MCF 10A (cell line): ENCODE measurements at regions of chr3 and their contacts with region 1.

Region 1: GRCh38 chr3:46089237-46090011 is 62.1 kb upstream of the XCR1 start:
- DNase-seq: peak; percentile 77
- H3K4me3 Mint-ChIP-seq: no peak overlapping the region
- H3K27ac Mint-ChIP-seq: peak overlapping the region; percentile 28
- H3K4me1 Mint-ChIP-seq: peaks cover 4% of the 10 kb centered on the region
- H3K27me3 Mint-ChIP-seq: no peaks in the 10 kb centered on the region
- CTCF ChIP-seq: no peak

Region 2: DNA sequence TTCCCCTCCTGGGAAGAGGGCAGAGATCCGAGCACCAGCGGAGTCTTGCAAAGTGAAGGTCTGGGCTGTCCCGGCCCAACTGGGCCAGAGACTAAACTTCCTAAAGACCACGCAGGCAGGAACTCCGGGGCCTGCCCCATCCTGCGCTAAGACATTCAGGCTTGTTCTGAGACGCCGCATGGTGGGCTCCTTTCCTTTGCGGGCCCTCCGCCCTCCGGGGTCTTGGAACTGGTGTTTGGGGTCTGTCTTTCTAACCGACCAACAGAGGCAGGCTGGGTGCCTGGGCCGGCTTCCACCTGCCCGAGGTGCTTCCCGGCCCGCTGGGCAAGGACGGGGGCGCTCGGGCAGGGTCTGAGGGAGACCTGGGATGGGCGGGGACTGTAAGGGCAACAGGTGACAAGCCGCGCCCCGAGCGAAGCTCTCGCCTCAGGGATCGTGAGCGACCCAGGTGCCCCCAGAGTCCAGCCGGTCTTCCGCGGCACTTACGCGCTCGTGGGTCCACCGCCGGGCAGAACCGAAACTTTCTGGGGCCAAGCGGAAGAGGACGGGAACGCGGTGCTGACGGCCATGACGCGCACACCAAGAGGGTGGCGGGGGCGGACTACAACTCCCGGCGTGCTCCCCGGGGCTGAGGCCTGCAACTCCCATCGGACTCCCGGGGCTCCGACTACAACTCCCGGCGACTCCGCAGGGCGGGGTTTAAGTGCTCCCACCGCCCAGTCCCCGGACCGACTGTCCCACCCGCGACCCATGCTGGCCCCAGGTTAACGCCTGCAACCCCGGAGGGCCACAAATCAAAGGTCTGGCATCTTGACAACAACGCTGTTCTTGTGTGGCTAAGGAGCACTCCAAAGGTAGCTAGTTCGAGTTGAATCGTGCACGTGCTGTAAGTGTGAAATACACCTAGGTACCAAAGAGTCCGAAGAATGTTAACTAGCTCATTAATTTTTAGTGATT is 93.9 kb before region 1 on chr3 and contains the start of gene FYCO1:
- CTCF ChIA-PET with region 1: no interaction called
- POLR2A ChIA-PET with region 1: no interaction called
- intact Hi-C with region 1: no loop called
- DNase-seq: peak; percentile 84
- H3K4me3 Mint-ChIP-seq: peak within 1 kb of the TSS; percentile 80
- H3K27ac Mint-ChIP-seq: peak within 1 kb of the TSS; percentile 35
- H3K4me1 Mint-ChIP-seq: peaks cover 6% of the 10 kb centered on the region
- H3K27me3 Mint-ChIP-seq: no peaks in the 10 kb centered on the region
- CTCF ChIP-seq: no peak
- total RNA-seq, gene FYCO1: 17.0 and 18.4 TPM in 2 replicates

Region 3: DNA sequence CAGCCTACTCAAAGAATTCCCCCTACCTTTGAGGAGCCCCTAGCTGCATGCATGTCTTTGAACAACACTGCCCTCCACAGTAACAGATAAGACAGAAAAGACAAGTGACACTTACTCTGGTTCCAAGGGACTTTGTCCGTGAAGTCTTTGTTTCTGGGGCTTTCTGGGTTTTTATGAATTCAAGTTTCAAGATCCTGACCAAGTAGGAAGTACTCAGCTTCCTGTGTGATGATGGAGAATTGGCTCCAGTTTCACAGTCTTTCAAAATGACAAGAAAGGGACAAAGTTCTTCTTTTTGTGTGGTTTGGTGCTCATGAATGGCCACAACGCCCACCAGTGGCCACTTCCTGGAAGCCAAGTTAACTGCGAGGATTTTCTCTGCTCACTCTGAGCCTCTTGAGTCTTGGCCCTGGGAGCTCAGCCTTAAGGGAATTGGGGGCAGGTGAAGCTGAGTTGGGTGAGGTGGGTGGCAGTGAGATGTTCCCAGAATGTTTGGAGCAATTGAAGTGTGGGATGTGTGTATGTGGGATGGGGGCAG is 118.8 kb after region 1 on chr3 and contains the start of gene CCR1:
- CTCF ChIA-PET with region 1: no interaction called
- POLR2A ChIA-PET with region 1: no interaction called
- intact Hi-C with region 1: loop called (anchors 1 kb)
- DNase-seq: peak; percentile 62
- H3K4me3 Mint-ChIP-seq: no peak within 1 kb of the TSS
- H3K27ac Mint-ChIP-seq: no peak within 1 kb of the TSS
- H3K4me1 Mint-ChIP-seq: no peaks in the 10 kb centered on the region
- H3K27me3 Mint-ChIP-seq: no peaks in the 10 kb centered on the region
- CTCF ChIP-seq: peak; percentile 46
- total RNA-seq, gene CCR1: not detected in 2 replicates

Region 4: GRCh38 chr3:46442576-46443562 is 353.4 kb after region 1 on chr3:
- CTCF ChIA-PET with region 1: no interaction called
- POLR2A ChIA-PET with region 1: no interaction called
- intact Hi-C with region 1: loop called (anchors 10 kb)
- DNase-seq: peak; percentile 64
- H3K4me3 Mint-ChIP-seq: no peak overlapping the region
- H3K27ac Mint-ChIP-seq: no peak overlapping the region
- H3K4me1 Mint-ChIP-seq: no peaks in the 10 kb centered on the region
- H3K27me3 Mint-ChIP-seq: peaks cover 12% of the 10 kb centered on the region
- CTCF ChIP-seq: peak; percentile 44

Region 5: GRCh38 chr3:46520531-46520930 is 431.1 kb after region 1 on chr3:
- CTCF ChIA-PET with region 1: no interaction called
- POLR2A ChIA-PET with region 1: no interaction called
- intact Hi-C with region 1: no loop called
- DNase-seq: no peak
- H3K4me3 Mint-ChIP-seq: no peak overlapping the region
- H3K27ac Mint-ChIP-seq: no peak overlapping the region
- H3K4me1 Mint-ChIP-seq: peaks cover 22% of the 10 kb centered on the region
- H3K27me3 Mint-ChIP-seq: no peaks in the 10 kb centered on the region
- CTCF ChIP-seq: no peak

Region 6: GRCh38 chr3:46558184-46559043 is 469.0 kb after region 1 on chr3:
- CTCF ChIA-PET with region 1: no interaction called
- POLR2A ChIA-PET with region 1: no interaction called
- intact Hi-C with region 1: loop called (anchors 10 kb)
- DNase-seq: peak; percentile 84
- H3K4me3 Mint-ChIP-seq: no peak overlapping the region
- H3K27ac Mint-ChIP-seq: peak overlapping the region; percentile 88
- H3K4me1 Mint-ChIP-seq: peaks cover 16% of the 10 kb centered on the region
- H3K27me3 Mint-ChIP-seq: no peaks in the 10 kb centered on the region
- CTCF ChIP-seq: peak; percentile 83